ENCODE measurements at regions of chr14 and their contacts with region 1.

Region 1: DNA sequence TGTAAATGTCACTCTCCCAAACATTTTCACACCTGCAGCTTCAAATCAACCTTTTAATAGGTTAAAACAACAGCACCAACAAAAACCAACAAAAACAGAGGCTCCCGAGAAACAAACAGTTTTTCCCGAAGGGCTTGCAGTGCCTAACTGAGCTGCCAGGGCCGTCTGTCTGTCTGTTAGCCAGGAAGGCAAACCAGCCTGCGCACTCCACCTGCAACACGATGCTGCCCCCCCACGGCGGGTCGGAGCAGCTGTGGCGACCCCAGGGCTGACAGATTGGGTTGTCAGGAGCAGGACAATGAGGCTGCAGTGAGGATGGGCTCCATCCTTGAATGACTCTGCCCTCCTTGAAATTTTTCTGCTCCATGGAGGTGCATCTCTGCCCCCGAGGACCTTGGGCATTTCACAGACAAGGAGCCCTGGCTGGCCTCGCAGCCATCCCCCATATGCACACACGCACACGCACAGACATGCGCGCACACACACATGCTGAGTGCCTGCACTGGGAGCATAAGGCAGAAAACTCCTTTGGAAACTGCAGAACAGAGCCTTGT is 2.6 kb downstream of the RTL1 start:
- DNase-seq: peak; percentile 61 to 79
- H3K4me3 ChIP-seq: no peak overlapping the region
- H3K4me3 Mint-ChIP-seq: peak overlapping the region; percentile 65
- H3K27ac Mint-ChIP-seq: no peak overlapping the region
- H3K4me1 ChIP-seq: peaks cover 9% of the 10 kb centered on the region
- H3K4me1 Mint-ChIP-seq: no peaks in the 10 kb centered on the region
- H3K27me3 ChIP-seq: no peaks in the 10 kb centered on the region; the same call in 1 of the 2 replicates
- H3K27me3 Mint-ChIP-seq: peaks cover 16% of the 10 kb centered on the region
- CTCF ChIP-seq: peak; percentile 39 to 80

Region 2: DNA sequence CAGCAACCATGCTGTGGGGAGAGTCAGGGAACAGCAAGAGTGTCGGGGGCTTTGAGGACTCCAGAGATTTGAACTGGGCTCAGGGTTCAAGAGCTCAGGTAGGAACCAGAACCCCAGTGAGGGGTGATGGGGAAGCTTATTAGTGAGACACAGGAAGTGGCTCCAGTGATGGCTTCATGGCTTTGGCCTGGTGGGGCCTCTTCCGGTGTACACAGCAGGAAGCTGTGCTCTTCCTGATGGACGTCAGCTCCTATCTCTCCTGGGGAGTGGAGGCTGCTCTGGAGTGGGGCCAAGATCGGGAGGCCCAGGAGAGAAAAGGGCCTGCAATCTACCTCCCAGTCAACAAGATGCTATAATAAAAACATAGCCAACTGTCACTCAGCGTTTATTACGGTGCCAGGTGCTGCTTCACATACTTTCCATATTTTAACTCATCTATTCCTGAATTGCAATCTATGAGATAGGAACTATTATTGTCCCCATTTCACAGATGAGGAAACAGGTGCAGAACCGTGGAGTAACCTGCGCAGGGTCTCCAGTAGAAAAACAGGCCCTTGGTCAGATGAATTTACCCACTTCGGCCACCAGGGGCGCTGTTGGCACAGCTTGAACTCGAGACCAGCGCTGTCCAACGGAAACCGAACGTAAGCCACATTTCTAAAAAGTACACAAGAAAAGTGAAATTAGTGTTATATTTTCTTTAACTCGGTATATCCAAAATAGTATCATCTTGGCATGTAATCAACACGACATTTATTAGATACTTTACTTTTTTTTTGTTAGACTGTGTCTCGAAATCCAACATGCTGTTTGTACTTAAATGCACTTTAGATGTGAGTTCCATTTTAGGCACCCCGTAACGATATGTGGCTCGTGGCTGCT is 237.8 kb before region 1 on chr14:
- CTCF ChIA-PET with region 1: no interaction called
- POLR2A ChIA-PET with region 1: no interaction called
- intact Hi-C with region 1: loop called (anchors 1 kb)
- DNase-seq: peak in 1 of 2 experiments; percentile 74
- H3K4me3 ChIP-seq: no peak overlapping the region
- H3K4me3 Mint-ChIP-seq: no peak overlapping the region
- H3K27ac Mint-ChIP-seq: no peak overlapping the region
- H3K4me1 ChIP-seq: no peaks in the 10 kb centered on the region
- H3K4me1 Mint-ChIP-seq: no peaks in the 10 kb centered on the region
- H3K27me3 ChIP-seq: no peaks in the 10 kb centered on the region
- H3K27me3 Mint-ChIP-seq: peaks cover 5% of the 10 kb centered on the region
- CTCF ChIP-seq: peak; percentile 86

Region 3: GRCh38 chr14:100708401-100709288 is 192.3 kb before region 1 on chr14:
- CTCF ChIA-PET with region 1: interaction called, 4 read pairs
- POLR2A ChIA-PET with region 1: no interaction called
- intact Hi-C with region 1: loop called (anchors 1 kb)
- DNase-seq: peak; percentile 64 to 68
- H3K4me3 ChIP-seq: no peak overlapping the region
- H3K4me3 Mint-ChIP-seq: no peak overlapping the region
- H3K27ac Mint-ChIP-seq: no peak overlapping the region
- H3K4me1 ChIP-seq: no peaks in the 10 kb centered on the region
- H3K4me1 Mint-ChIP-seq: no peaks in the 10 kb centered on the region
- H3K27me3 ChIP-seq: no peaks in the 10 kb centered on the region
- H3K27me3 Mint-ChIP-seq: peaks cover 7% of the 10 kb centered on the region
- CTCF ChIP-seq: peak; percentile 32 to 44

Region 4: DNA sequence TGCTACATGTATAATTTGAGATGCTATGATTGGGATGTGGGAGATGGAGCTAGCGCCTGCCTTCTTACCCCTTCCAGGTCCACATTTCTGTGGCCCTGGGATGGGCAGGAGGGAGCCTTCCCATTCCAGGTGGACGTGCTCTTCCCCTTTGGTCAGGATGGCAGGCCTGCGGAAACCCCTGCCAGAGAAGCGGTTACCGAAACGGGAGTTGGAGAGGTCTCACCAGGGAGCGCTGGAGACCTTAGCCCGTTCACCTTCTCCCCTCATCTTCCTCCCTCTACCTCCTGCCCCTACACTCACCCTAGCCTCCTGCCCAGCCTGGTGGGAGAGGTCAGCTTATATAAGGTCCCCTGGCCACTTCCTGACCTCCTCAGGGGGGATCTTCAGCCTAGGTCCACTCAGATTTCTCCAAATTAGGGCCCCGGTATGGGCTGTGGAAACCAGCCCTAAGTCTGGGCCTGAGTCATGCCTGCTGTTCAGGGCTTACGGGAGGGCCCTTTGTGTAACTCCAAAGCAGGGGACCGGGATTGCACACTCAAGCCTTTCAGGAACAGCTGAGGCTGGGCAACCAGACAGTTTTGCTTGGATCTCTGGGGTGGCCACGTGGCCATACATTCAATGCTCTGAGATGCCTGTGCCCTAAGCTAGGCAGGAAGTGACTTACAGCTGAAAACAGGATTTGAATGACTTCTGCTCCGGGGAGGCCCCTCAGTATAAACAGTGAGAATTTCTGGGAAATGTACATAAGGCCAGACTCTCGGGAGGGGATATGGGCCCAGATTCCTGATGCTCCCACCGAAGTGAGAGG is 85.2 kb before region 1 on chr14:
- CTCF ChIA-PET with region 1: interaction called, 3 read pairs
- POLR2A ChIA-PET with region 1: no interaction called
- intact Hi-C with region 1: loop called (anchors 1 kb)
- DNase-seq: no peak
- H3K4me3 ChIP-seq: no peak overlapping the region
- H3K4me3 Mint-ChIP-seq: no peak overlapping the region
- H3K27ac Mint-ChIP-seq: no peak overlapping the region
- H3K4me1 ChIP-seq: peaks cover 24% of the 10 kb centered on the region
- H3K4me1 Mint-ChIP-seq: peaks cover 7% of the 10 kb centered on the region
- H3K27me3 ChIP-seq: no peaks in the 10 kb centered on the region
- H3K27me3 Mint-ChIP-seq: no peaks in the 10 kb centered on the region
- CTCF ChIP-seq: no peak

Region 5: GRCh38 chr14:100855256-100855875 is 45.5 kb before region 1 on chr14:
- CTCF ChIA-PET with region 1: interaction called, 6 read pairs
- POLR2A ChIA-PET with region 1: no interaction called
- intact Hi-C with region 1: loop called (anchors 1 kb)
- DNase-seq: no peak
- H3K4me3 ChIP-seq: no peak overlapping the region
- H3K4me3 Mint-ChIP-seq: no peak overlapping the region
- H3K27ac Mint-ChIP-seq: no peak overlapping the region
- H3K4me1 ChIP-seq: no peaks in the 10 kb centered on the region
- H3K4me1 Mint-ChIP-seq: no peaks in the 10 kb centered on the region
- H3K27me3 ChIP-seq: no peaks in the 10 kb centered on the region
- H3K27me3 Mint-ChIP-seq: peaks cover 6% of the 10 kb centered on the region
- CTCF ChIP-seq: no peak

Region 6: DNA sequence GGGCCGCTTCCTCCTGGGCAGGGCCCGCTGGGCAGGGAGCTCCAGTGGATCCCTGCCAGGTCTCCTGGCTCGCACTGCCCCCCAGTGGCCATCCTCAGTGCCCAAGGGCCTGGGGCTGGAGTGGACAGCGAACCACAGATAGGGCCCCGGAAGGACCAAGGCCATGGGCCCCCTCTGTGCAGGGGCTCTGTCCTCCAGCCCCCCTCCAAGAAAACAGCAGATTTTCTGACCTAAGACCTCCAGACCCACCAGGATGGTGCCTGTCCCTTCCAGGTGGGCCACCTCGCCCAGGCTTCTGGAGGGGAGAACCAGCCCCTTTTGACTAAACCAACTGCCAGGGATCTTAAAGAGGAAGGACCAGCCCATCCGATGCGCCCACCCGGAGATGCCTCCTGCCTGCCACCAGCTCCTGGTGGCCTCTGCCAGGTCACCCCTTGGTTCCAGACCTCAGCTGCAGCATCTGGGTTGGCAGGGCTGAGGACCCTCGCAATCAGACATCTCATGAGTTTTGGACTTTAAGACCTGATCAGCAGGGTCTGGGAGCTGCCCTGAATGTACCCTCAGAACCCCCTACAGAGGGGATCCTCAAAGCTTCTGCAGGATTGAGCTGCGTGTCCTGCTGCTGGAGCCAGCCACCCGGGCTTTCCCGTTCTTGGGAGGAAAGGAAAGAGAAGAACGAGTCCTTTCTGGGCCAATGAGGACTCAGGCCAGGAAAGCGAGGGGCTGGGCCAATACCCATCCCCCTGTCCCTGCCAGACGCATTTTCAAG is 334.6 kb after region 1 on chr14:
- CTCF ChIA-PET with region 1: interaction called, 4 read pairs
- POLR2A ChIA-PET with region 1: no interaction called
- intact Hi-C with region 1: loop called (anchors 5 kb)
- DNase-seq: peak; percentile 26 to 54
- H3K4me3 ChIP-seq: no peak overlapping the region
- H3K4me3 Mint-ChIP-seq: no peak overlapping the region
- H3K27ac Mint-ChIP-seq: no peak overlapping the region
- H3K4me1 ChIP-seq: no peaks in the 10 kb centered on the region
- H3K4me1 Mint-ChIP-seq: no peaks in the 10 kb centered on the region
- H3K27me3 ChIP-seq: no peaks in the 10 kb centered on the region
- H3K27me3 Mint-ChIP-seq: no peaks in the 10 kb centered on the region
- CTCF ChIP-seq: peak; percentile 27 to 48

Measured in Caco-2 (cell line).